ENCODE measurements at regions of chr14 and their contacts with region 1.

Region 1: GRCh38 chr14:76910371-76910890 is 84.2 kb downstream of the LRRC74A start:
- DNase-seq: no peak
- ATAC-seq: no peak
- H3K4me3 ChIP-seq: no peak overlapping the region
- H3K27ac ChIP-seq: no peak overlapping the region
- H3K4me1 ChIP-seq: peaks cover 9% of the 10 kb centered on the region
- H3K27me3 ChIP-seq: no peaks in the 10 kb centered on the region
- CTCF ChIP-seq: no peak
- EP300 ChIP-seq: no peak
- POLR2A ChIP-seq: no peak
- RAD21 ChIP-seq: no peak

Region 2: DNA sequence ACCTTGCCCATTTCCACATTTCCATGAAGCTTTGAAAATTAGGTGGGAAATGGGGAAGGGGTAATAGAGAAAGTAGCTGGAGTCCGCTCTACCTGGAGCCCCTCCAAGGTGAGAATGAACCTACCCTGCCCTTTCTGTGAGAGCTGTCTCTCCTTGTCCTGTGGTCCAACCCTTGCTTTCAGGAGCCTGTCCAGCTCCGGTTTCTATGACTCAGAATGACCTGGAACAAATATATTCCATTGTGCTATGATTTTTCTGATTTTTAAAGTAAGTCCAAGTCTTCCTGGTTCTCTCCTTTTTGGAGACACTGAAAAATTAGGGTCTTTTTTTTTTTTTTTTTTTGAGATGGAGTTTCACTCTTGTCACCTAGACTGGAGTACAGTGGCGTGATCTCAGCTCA is 238.3 kb before region 1 on chr14:
- CTCF ChIA-PET with region 1: no interaction called
- POLR2A ChIA-PET with region 1: no interaction called
- RAD21 ChIA-PET with region 1: no interaction called
- SMC1A ChIA-PET with region 1: no interaction called
- in situ Hi-C with region 1: no loop called
- intact Hi-C with region 1: no loop called
- DNase-seq: no peak
- ATAC-seq: no peak
- H3K4me3 ChIP-seq: no peak overlapping the region
- H3K27ac ChIP-seq: no peak overlapping the region
- H3K4me1 ChIP-seq: no peaks in the 10 kb centered on the region
- H3K27me3 ChIP-seq: peaks cover 0 to 2% of the 10 kb centered on the region in 2 experiments; a peak in 3 of 4 replicates
- CTCF ChIP-seq: no peak
- EP300 ChIP-seq: no peak
- POLR2A ChIP-seq: no peak
- RAD21 ChIP-seq: no peak

Region 3: GRCh38 chr14:77033622-77034521 is 123.4 kb after region 1 on chr14:
- CTCF ChIA-PET with region 1: interaction called, 25 read pairs
- POLR2A ChIA-PET with region 1: interaction called, 4 read pairs
- RAD21 ChIA-PET with region 1: interaction called, 23 read pairs
- SMC1A ChIA-PET with region 1: interaction called, 17 read pairs
- in situ Hi-C with region 1: no loop called
- intact Hi-C with region 1: no loop called
- DNase-seq: peak; percentile 72
- ATAC-seq: peak; percentile 86
- H3K4me3 ChIP-seq: peak overlapping the region; percentile 78
- H3K27ac ChIP-seq: peak overlapping the region; percentile 99
- H3K4me1 ChIP-seq: peaks cover 61% of the 10 kb centered on the region
- H3K27me3 ChIP-seq: no peaks in the 10 kb centered on the region
- CTCF ChIP-seq: no peak
- EP300 ChIP-seq: peak in 1 of 2 experiments; percentile 47; a peak in 3 of 4 replicates
- POLR2A ChIP-seq: peak; percentile 85
- RAD21 ChIP-seq: no peak

Region 4: DNA sequence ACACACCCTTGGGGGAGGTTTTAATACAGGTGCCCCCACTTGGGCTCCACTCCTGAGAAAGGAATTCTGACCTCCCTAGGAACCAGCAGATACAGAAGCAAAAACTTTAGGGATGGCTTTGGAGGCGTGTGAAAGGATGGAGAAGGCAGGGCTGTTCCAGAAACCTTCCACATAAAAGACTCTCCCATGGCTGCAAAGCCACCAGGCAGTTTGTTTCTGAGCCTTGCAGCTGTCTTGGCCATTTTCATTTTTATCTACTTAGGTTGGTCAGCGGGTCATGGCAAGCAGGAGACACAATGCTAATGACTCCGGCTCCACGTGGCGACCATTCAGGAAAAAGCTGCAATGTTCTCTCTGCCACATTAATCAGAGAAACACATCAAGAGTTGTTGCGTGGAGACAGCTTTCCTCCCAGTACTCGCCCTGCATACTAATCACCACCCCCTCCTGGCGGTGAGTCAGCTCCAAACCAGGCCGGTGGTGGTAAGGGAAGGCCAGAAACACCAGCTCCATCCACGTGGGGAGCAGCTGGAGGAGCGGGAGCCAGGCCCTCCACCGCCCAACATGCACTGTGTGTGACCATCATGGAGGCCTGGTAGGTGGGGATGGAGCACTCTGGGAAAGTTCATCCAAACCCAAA is 149.0 kb after region 1 on chr14:
- CTCF ChIA-PET with region 1: interaction called, 170 read pairs
- POLR2A ChIA-PET with region 1: interaction called, 11 read pairs
- RAD21 ChIA-PET with region 1: interaction called, 166 read pairs
- SMC1A ChIA-PET with region 1: interaction called, 174 read pairs
- in situ Hi-C with region 1: loop called (anchors 10 kb)
- intact Hi-C with region 1: no loop called
- DNase-seq: no peak
- ATAC-seq: peak; percentile 57
- H3K4me3 ChIP-seq: no peak overlapping the region
- H3K27ac ChIP-seq: no peak overlapping the region
- H3K4me1 ChIP-seq: no peaks in the 10 kb centered on the region
- H3K27me3 ChIP-seq: no peaks in the 10 kb centered on the region
- CTCF ChIP-seq: peak in 2 of 3 experiments; percentile 1 to 18; a peak in 1 of 6 replicates
- EP300 ChIP-seq: no peak
- POLR2A ChIP-seq: no peak
- RAD21 ChIP-seq: peak; percentile 27; the same call in 1 of the 2 replicates

Region 5: DNA sequence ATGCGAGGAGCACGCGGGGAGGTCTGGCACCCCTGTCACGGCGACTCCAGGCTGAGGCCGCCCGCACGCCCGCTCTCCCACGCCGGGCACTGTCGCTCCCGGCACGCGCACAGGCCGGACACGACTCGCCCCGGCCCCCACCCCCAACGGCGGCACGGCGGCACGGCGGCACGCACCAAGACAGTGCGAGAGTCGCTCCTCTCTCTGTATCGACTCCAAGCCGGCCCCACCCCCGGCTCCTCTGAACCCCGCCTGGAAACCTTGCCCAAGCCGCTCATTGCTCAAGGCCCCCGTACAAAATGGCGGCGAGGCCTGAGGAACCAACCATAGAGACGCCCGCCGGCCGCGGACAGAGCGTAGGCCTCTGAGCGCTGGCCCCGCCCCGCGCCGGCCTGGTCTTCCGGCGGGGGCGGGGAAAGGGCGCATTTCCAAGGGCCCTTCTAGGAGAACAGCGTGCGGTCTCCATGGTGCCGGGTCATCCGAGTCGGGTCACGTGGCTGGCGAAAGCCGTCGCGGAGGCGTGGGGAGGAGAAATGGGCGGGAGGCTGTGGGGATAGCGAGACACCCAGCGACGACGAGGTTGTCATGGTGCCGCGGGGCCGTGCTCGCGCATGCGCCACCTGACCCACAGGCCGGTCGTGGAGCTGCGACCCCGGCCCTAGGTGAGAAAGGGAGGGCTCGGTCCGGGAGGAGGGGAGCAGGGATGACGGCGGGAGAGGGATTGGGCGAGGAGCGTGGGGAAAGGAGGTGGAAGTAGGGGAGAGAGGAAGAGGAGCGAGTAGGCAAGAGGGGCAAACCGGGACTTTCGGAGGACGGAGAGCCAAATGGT is 187.5 kb after region 1 on chr14 and contains the start of gene CIPC:
- CTCF ChIA-PET with region 1: interaction called, 20 read pairs
- POLR2A ChIA-PET with region 1: interaction called, 3 read pairs
- RAD21 ChIA-PET with region 1: interaction called, 12 read pairs
- SMC1A ChIA-PET with region 1: interaction called, 5 read pairs
- in situ Hi-C with region 1: no loop called
- intact Hi-C with region 1: no loop called
- DNase-seq: peak; percentile 97
- ATAC-seq: peak; percentile 90
- H3K4me3 ChIP-seq: peak within 1 kb of the TSS; percentile 83
- H3K27ac ChIP-seq: peak within 1 kb of the TSS; percentile 87
- H3K4me1 ChIP-seq: peaks cover 17% of the 10 kb centered on the region
- H3K27me3 ChIP-seq: no peaks in the 10 kb centered on the region
- CTCF ChIP-seq: peak in 1 of 3 experiments; percentile 7; a peak in 1 of 6 replicates
- EP300 ChIP-seq: peak in 1 of 2 experiments; percentile 78; a peak in 2 of 4 replicates
- POLR2A ChIP-seq: peak; percentile 86
- RAD21 ChIP-seq: no peak
- polyA plus RNA-seq, gene CIPC: 5.6 to 6.6 TPM

Measured in GM12878 (cell line).